SK-N-SH (cell line): ENCODE measurements at regions of chr6 and their contacts with region 1.

Region 1: GRCh38 chr6:70369332-70369950 is 43.9 kb upstream of the FAM135A start:
- DNase-seq: peak; percentile 60
- H3K4me3 ChIP-seq: peak overlapping the region in 1 of 2 experiments; percentile 24; a peak in 1 of 4 replicates
- H3K27ac ChIP-seq: no peak overlapping the region
- H3K4me1 ChIP-seq: no peaks in the 10 kb centered on the region; a peak in 2 of 4 replicates
- H3K27me3 ChIP-seq: peaks cover 6% of the 10 kb centered on the region; the same call in 1 of the 2 replicates
- CTCF ChIP-seq: peak; percentile 89
- EP300 ChIP-seq: no peak
- RAD21 ChIP-seq: peak; percentile 85

Region 2: GRCh38 chr6:70299456-70299855 is 70.0 kb before region 1 on chr6:
- CTCF ChIA-PET with region 1: interaction called, 75 read pairs
- POLR2A ChIA-PET with region 1: no interaction called
- DNase-seq: no peak
- H3K4me3 ChIP-seq: no peak overlapping the region
- H3K27ac ChIP-seq: no peak overlapping the region
- H3K4me1 ChIP-seq: no peaks in the 10 kb centered on the region
- H3K27me3 ChIP-seq: no peaks in the 10 kb centered on the region; the same call in 1 of the 2 replicates
- CTCF ChIP-seq: no peak
- EP300 ChIP-seq: no peak
- RAD21 ChIP-seq: no peak

Region 3: GRCh38 chr6:70327036-70327435 is 42.4 kb before region 1 on chr6:
- CTCF ChIA-PET with region 1: interaction called, 10 read pairs
- POLR2A ChIA-PET with region 1: no interaction called
- DNase-seq: no peak
- H3K4me3 ChIP-seq: no peak overlapping the region
- H3K27ac ChIP-seq: no peak overlapping the region
- H3K4me1 ChIP-seq: no peaks in the 10 kb centered on the region
- H3K27me3 ChIP-seq: no peaks in the 10 kb centered on the region
- CTCF ChIP-seq: no peak
- EP300 ChIP-seq: no peak
- RAD21 ChIP-seq: no peak

Region 4: DNA sequence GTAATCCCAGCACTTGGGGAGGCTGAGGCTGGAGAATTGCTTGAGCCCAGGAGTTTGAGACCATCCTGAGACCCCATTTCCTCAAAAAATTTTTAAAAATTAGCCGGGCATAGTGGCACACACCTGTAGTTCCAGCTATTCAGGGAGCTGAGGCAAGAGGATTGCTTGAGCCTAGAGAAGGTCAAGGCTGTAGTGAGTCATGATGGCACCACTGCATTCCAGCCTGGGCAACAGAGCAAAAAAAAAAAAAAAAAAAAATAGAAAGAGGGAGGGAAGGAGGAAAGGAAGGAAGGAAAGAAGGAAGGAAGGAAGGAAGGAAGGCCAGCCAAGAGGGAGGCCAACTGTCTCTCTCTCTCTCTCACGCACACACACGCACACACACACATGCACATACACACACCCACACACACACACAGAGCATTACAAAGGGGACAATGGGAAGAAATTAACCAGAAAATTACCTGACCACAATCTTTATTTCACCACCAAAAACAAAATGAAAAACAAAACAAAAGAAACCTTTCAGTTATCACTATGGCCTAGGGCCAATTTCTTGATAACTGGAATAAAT is 16.0 kb before region 1 on chr6:
- CTCF ChIA-PET with region 1: interaction called, 17 read pairs
- POLR2A ChIA-PET with region 1: no interaction called
- DNase-seq: no peak
- H3K4me3 ChIP-seq: no peak overlapping the region
- H3K27ac ChIP-seq: no peak overlapping the region
- H3K4me1 ChIP-seq: peaks cover 0 to 4% of the 10 kb centered on the region in 2 experiments; a peak in 2 of 4 replicates
- H3K27me3 ChIP-seq: no peaks in the 10 kb centered on the region
- CTCF ChIP-seq: no peak
- EP300 ChIP-seq: no peak
- RAD21 ChIP-seq: no peak

Region 5: DNA sequence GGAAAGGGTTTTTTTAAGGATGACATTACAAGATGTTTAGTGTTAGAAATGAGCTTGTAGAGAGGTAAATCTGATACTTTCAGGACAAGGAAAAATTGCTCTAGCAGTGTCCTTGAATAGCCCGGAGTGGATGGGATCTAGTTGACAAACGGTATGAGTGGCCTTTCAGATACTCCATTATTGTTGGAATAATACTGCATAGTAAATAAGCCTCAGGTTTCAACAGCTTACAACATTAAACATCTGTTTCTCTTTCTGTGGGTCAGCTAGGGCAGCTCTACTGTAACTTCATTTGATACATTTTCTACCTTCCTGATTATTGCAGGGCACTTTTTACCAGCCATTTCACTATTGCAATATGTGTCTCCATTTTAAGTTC is 469.5 kb after region 1 on chr6:
- CTCF ChIA-PET with region 1: no interaction called
- POLR2A ChIA-PET with region 1: no interaction called
- DNase-seq: no peak
- H3K4me3 ChIP-seq: no peak overlapping the region
- H3K27ac ChIP-seq: no peak overlapping the region
- H3K4me1 ChIP-seq: peaks cover 0 to 9% of the 10 kb centered on the region in 2 experiments; a peak in 1 of 4 replicates
- H3K27me3 ChIP-seq: no peaks in the 10 kb centered on the region
- CTCF ChIP-seq: no peak
- EP300 ChIP-seq: no peak
- RAD21 ChIP-seq: no peak

Region 6: DNA sequence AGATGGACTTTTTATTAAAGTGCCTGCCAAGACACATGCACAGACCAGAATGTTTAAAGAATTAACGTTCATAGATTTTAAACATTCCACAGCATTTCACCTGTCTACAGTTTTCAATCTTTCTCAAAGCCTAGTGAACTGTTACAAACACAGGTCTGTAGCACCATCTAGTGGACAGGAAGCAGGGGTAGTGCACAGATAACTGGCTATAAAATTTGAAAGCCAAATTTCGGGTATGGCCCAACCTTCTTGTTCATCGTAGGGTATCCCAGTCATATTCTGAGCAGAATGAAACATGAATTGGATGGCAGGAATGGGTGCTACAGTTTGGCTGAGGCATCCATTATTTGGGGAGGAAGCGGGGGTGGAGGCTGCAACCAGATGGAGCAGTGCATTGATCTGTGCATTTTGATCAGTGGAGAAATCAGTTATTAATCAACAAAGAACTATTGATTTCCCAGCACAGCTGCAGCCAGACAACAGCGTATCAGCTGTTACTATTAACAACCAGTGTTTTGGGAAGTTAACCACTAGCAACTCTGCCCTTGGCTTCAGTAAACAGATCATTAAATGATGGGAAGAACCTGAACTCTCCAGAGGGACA is 643.5 kb after region 1 on chr6:
- CTCF ChIA-PET with region 1: interaction called, 13 read pairs
- POLR2A ChIA-PET with region 1: no interaction called
- DNase-seq: peak; percentile 56
- H3K4me3 ChIP-seq: no peak overlapping the region
- H3K27ac ChIP-seq: no peak overlapping the region
- H3K4me1 ChIP-seq: no peaks in the 10 kb centered on the region
- H3K27me3 ChIP-seq: no peaks in the 10 kb centered on the region
- CTCF ChIP-seq: peak; percentile 86
- EP300 ChIP-seq: no peak
- RAD21 ChIP-seq: peak; percentile 90